OCI-LY7 (cell line): ENCODE measurements at regions of chr11 and their contacts with region 1.

Region 1: GRCh38 chr11:122661182-122661945 is 5.8 kb downstream of the UBASH3B start:
- DNase-seq: no peak
- H3K4me3 ChIP-seq: no peak overlapping the region
- H3K27ac ChIP-seq: no peak overlapping the region
- H3K4me1 ChIP-seq: peaks cover 94% of the 10 kb centered on the region
- CTCF ChIP-seq: no peak

Region 2: DNA sequence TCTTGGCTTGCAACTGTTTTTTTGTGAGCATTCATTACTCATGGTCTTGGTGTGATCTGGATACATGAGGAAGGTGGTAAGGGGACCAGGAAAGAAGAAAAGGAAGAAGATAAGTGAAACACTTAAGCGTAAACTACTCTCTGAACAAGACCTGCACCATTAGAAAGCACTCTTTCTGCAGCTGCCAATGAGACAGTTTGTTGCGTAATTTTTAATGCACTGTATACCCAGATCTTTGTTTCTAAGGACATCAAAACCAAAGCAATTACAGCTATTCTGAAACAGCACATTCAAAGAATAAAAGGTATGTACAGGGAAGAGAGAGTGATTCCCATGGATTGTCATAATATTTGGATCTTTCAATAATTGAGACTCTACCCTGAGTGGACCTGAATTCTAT is 692.7 kb before region 1 on chr11:
- CTCF ChIA-PET with region 1: no interaction called
- POLR2A ChIA-PET with region 1: no interaction called
- intact Hi-C with region 1: no loop called
- DNase-seq: no peak
- H3K4me3 ChIP-seq: no peak overlapping the region
- H3K27ac ChIP-seq: no peak overlapping the region
- H3K4me1 ChIP-seq: no peaks in the 10 kb centered on the region
- CTCF ChIP-seq: no peak

Region 3: DNA sequence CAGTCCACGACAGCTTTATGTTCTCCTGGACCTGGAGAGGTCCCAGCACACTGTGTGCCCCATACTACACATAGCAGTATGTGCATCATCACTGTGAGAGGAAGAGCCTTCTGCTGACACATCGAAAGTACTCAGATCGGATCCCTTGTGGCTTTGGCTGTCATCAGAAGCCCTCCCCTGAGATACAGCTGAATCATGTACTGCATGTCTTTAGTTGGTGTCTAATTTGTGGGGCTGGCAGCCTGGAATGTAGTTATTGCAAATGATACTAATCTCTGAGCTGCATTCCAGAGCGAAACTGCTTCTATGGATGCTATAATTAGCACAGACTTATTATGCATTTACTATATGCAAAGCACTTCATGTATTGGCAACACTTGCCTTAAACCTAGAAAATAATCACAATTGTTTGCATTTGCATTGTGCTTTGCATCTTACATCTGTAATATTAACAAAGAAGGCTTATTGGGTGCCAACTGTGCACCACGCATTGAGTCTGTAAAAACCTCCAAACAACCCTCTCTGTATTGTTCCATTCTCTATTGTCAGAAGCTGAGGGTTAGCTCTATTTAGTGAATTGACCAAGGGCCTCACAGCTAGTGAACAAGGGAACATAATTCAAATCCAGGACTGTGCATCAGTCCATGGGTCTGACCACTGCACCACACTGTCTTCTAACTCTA is 87.8 kb after region 1 on chr11:
- CTCF ChIA-PET with region 1: interaction called, 8 read pairs
- POLR2A ChIA-PET with region 1: interaction called, 56 read pairs
- intact Hi-C with region 1: no loop called
- DNase-seq: peak; percentile 70
- H3K4me3 ChIP-seq: peak overlapping the region; percentile 4
- H3K27ac ChIP-seq: no peak overlapping the region
- H3K4me1 ChIP-seq: peaks cover 95% of the 10 kb centered on the region
- CTCF ChIP-seq: no peak